Keratinocyte (primary cell): ENCODE measurements at regions of chr2 and their contacts with region 1.

Region 1: GRCh38 chr2:188089901-188090300 is 201.8 kb upstream of the GULP1 start:
- DNase-seq: no peak
- H3K4me3 ChIP-seq: no peak overlapping the region
- H3K27ac ChIP-seq: no peak overlapping the region
- H3K4me1 ChIP-seq: no peaks in the 10 kb centered on the region
- H3K27me3 ChIP-seq: no peaks in the 10 kb centered on the region
- CTCF ChIP-seq: no peak

Region 2: DNA sequence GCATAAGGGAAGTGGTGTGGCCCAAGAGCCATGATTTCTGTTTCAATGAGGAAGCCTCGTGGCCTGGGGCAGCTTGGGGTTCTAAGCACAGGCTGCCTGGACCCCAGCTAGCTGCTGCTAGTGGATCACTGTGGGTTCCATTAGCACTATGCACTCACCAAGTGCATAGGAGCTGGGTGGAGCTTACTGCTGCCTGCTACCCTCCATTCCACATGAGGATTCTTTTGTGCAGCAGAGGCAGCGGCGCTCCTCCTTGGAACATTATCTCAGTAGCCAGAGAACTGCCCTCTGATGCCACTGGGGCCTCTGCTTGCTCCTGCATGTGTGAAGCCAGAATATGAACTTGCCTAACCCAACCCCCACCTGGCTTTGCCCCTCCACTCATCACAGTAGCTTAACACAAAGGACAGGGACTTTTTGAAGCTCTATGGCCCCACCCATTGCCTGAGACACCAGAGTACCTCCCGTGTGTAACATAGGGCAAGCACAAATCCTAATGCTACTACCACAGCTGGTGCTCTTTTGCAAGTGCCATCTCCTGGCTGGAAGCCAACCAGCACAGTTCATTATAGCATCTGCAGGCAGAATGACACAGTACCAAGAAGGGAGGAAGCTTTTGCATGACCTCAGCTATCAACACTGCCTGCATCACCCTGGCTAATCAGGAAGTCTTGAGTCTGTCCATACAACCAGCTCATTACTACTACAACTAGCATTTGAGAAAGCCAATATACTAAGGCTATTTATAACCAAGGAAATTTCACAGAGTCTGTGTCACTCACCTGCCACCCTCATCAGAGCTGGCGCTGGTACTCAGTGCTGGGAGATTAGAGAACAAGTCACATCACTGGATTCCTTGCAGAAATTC is 95.2 kb before region 1 on chr2:
- dilution Hi-C with region 1: loop called (anchors 10 kb)
- DNase-seq: no peak
- H3K4me3 ChIP-seq: no peak overlapping the region
- H3K27ac ChIP-seq: no peak overlapping the region
- H3K4me1 ChIP-seq: no peaks in the 10 kb centered on the region
- H3K27me3 ChIP-seq: no peaks in the 10 kb centered on the region
- CTCF ChIP-seq: no peak

Region 3: GRCh38 chr2:188610827-188611226 is 520.9 kb after region 1 on chr2:
- dilution Hi-C with region 1: no loop called
- DNase-seq: no peak
- H3K4me3 ChIP-seq: no peak overlapping the region
- H3K27ac ChIP-seq: no peak overlapping the region
- H3K4me1 ChIP-seq: no peaks in the 10 kb centered on the region
- H3K27me3 ChIP-seq: no peaks in the 10 kb centered on the region
- CTCF ChIP-seq: no peak